ENCODE measurements at regions of chr6 and their contacts with region 1.

Region 1: GRCh38 chr6:26431258-26432172 is 8.8 kb upstream of the BTN3A3 start:
- DNase-seq: no peak
- H3K4me3 ChIP-seq: no peak overlapping the region
- H3K27ac ChIP-seq: no peak overlapping the region
- H3K4me1 ChIP-seq: no peaks in the 10 kb centered on the region
- H3K27me3 ChIP-seq: no peaks in the 10 kb centered on the region
- CTCF ChIP-seq: no peak
- POLR2A ChIP-seq: no peak

Region 2: DNA sequence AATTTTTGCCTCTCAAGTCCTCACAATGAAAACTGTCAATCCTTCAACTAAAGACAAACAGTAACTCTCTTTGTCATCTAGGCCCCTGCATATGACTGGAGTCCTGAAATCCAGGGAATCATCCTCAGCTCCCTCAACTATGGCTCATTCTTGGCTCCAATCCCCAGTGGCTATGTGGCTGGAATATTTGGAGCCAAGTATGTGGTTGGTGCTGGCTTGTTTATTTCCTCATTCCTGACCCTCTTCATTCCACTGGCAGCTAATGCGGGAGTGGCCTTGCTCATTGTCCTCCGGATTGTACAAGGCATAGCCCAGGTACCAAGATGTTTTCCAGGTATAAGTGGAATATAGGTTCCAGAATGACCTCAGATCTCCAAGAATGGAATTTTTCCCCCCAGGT is 661.5 kb before region 1 on chr6:
- intact Hi-C with region 1: loop called (anchors 10 kb)
- DNase-seq: peak in 1 of 2 donors; percentile 56
- H3K4me3 ChIP-seq: no peak overlapping the region
- H3K27ac ChIP-seq: no peak overlapping the region
- H3K4me1 ChIP-seq: no peaks in the 10 kb centered on the region
- H3K27me3 ChIP-seq: no peaks in the 10 kb centered on the region
- CTCF ChIP-seq: no peak
- POLR2A ChIP-seq: no peak

Region 3: DNA sequence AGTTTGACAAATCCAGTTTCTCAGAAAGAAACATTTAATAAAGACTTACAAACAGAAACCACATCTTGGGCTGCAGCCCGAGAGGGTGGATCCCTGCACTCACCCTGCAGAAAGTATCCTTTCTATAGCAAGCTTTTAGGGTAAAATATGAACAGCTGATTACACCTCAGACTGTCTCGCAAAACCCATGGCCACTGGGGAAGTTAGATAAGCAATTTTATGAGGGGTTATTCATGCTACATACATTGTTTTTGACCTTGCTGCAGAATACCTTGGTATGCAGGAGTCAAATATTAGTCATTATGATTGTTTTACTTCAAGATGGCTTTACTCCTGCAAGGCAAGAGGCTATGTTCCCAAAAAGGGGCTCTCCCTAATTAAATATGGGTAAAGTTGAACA is 1353.8 kb after region 1 on chr6:
- intact Hi-C with region 1: no loop called
- DNase-seq: no peak
- H3K4me3 ChIP-seq: no peak overlapping the region
- H3K27ac ChIP-seq: no peak overlapping the region
- H3K4me1 ChIP-seq: no peaks in the 10 kb centered on the region
- H3K27me3 ChIP-seq: peaks cover 0 to 6% of the 10 kb centered on the region in 2 donors
- CTCF ChIP-seq: no peak
- POLR2A ChIP-seq: no peak

Measured in breast epithelium (tissue), 4 donors.